ENCODE measurements at regions of chr11 and their contacts with region 1.

Region 1: GRCh38 chr11:46718155-46719019 is 626 bp upstream of the F2 start:
- DNase-seq: peak; percentile 98
- ATAC-seq: peak; percentile 92
- H3K4me3 ChIP-seq: peak overlapping the region in 2 of 3 experiments; percentile 3 to 92; a peak in 4 of 6 replicates
- H3K27ac ChIP-seq: peak overlapping the region; percentile 92
- H3K4me1 ChIP-seq: peaks cover 87% of the 10 kb centered on the region
- H3K27me3 ChIP-seq: no peaks in the 10 kb centered on the region; a peak in 1 of 5 replicates
- CTCF ChIP-seq: peak; percentile 50
- EP300 ChIP-seq: peak; percentile 77 to 97; a peak in 2 of 4 replicates
- POLR2A ChIP-seq: peak; percentile 56 to 58
- RAD21 ChIP-seq: peak; percentile 55

Region 2: DNA sequence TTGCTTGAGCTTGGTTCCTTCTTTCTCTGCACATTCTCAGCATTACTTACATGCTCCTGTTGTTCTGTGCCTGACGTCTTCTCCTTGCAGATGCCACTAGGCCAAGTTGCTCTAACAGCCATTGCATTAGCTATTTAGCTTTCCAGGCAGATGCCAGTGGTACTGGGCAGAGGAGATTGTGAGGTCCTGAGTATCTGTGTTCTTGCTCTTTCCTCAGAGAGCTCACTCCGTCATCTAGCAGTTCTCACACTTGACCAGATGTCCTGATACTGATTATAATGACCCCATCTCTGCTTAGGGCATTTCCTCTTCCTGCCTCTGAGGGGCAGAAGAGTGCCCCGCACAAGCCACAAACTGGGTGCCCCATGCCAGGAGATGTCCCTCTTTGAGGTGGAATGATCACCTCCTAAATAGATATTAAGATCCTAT is 48.7 kb before region 1 on chr11:
- CTCF ChIA-PET with region 1: no interaction called
- POLR2A ChIA-PET with region 1: interaction called, 22 read pairs
- in situ Hi-C with region 1: no loop called
- intact Hi-C with region 1: loop called (anchors 5 kb)
- DNase-seq: peak; percentile 23
- ATAC-seq: peak; percentile 74
- H3K4me3 ChIP-seq: no peak overlapping the region
- H3K27ac ChIP-seq: no peak overlapping the region
- H3K4me1 ChIP-seq: peaks cover 9% of the 10 kb centered on the region
- H3K27me3 ChIP-seq: no peaks in the 10 kb centered on the region
- CTCF ChIP-seq: peak; percentile 70
- EP300 ChIP-seq: no peak
- POLR2A ChIP-seq: no peak
- RAD21 ChIP-seq: peak; percentile 66; the same call in 1 of the 2 replicates

Region 3: GRCh38 chr11:46693597-46694012 is 24.8 kb before region 1 on chr11:
- CTCF ChIA-PET with region 1: no interaction called
- POLR2A ChIA-PET with region 1: interaction called, 272 read pairs
- in situ Hi-C with region 1: no loop called
- intact Hi-C with region 1: no loop called
- DNase-seq: no peak
- ATAC-seq: no peak
- H3K4me3 ChIP-seq: no peak overlapping the region
- H3K27ac ChIP-seq: peak overlapping the region; percentile 13
- H3K4me1 ChIP-seq: peaks cover 74% of the 10 kb centered on the region
- H3K27me3 ChIP-seq: no peaks in the 10 kb centered on the region
- CTCF ChIP-seq: no peak
- EP300 ChIP-seq: no peak
- POLR2A ChIP-seq: no peak
- RAD21 ChIP-seq: no peak

Region 4: DNA sequence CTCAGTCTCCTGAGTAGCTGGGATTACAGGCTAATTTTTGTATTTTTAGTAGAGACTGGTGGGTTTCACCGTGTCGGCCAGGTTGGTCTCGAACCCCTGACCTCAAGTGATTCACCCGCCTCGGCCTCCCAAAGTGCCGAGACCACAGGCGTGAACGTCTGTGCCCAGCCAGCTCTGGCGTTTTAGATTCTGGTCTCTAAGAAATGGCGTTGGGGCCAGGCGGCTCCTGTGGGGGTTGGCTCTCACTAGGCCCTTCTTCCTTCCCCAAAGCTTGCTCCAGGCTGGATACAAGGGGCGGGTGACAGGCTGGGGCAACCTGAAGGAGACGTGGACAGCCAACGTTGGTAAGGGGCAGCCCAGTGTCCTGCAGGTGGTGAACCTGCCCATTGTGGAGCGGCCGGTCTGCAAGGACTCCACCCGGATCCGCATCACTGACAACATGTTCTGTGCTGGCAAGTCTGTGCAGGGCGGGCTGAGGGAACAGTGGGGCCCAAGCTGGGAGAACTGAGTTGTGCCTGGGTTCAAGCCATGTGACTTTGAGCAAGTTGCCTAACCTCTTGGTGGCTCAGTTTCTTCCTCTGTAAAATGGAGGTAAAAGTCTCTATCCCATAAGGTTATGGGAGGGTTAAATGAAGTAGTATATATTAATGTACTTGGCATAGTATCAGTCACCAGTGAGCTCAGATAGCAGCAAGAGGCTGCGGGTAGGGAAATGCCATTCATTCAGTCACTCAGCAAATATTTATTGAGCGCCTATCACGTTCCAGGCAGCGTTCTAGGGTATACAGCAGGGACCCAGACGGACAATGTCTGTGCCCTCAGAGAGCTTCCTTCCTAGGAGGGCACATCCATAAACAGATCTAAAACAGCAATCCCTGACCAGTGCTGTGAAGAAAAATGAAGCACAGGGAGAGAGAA is 11.0 kb after region 1 on chr11:
- CTCF ChIA-PET with region 1: no interaction called
- POLR2A ChIA-PET with region 1: interaction called, 58 read pairs
- in situ Hi-C with region 1: no loop called
- intact Hi-C with region 1: no loop called
- DNase-seq: no peak
- ATAC-seq: peak; percentile 3; the same call in 1 of the 3 replicates
- H3K4me3 ChIP-seq: no peak overlapping the region
- H3K27ac ChIP-seq: no peak overlapping the region
- H3K4me1 ChIP-seq: peaks cover 56% of the 10 kb centered on the region
- H3K27me3 ChIP-seq: no peaks in the 10 kb centered on the region
- CTCF ChIP-seq: no peak
- EP300 ChIP-seq: no peak
- POLR2A ChIP-seq: peak in 1 of 2 experiments; percentile 36; a peak in 1 of 4 replicates
- RAD21 ChIP-seq: no peak

Region 5: GRCh38 chr11:46743693-46744339 is 25.4 kb after region 1 on chr11:
- CTCF ChIA-PET with region 1: no interaction called
- POLR2A ChIA-PET with region 1: interaction called, 58 read pairs
- in situ Hi-C with region 1: no loop called
- intact Hi-C with region 1: no loop called
- DNase-seq: no peak
- ATAC-seq: peak; percentile 17
- H3K4me3 ChIP-seq: no peak overlapping the region
- H3K27ac ChIP-seq: peak overlapping the region; percentile 27
- H3K4me1 ChIP-seq: no peaks in the 10 kb centered on the region
- H3K27me3 ChIP-seq: no peaks in the 10 kb centered on the region
- CTCF ChIP-seq: no peak
- EP300 ChIP-seq: no peak
- POLR2A ChIP-seq: peak in 1 of 2 experiments; percentile 38; a peak in 2 of 4 replicates
- RAD21 ChIP-seq: no peak

Region 6: GRCh38 chr11:46889689-46890475 is 171.5 kb after region 1 on chr11:
- CTCF ChIA-PET with region 1: no interaction called
- POLR2A ChIA-PET with region 1: no interaction called
- in situ Hi-C with region 1: no loop called
- intact Hi-C with region 1: no loop called
- DNase-seq: peak; percentile 65
- ATAC-seq: peak; percentile 88
- H3K4me3 ChIP-seq: no peak overlapping the region
- H3K27ac ChIP-seq: no peak overlapping the region
- H3K4me1 ChIP-seq: no peaks in the 10 kb centered on the region
- H3K27me3 ChIP-seq: no peaks in the 10 kb centered on the region
- CTCF ChIP-seq: peak; percentile 86
- EP300 ChIP-seq: no peak
- POLR2A ChIP-seq: no peak
- RAD21 ChIP-seq: peak; percentile 81

Region 7: GRCh38 chr11:47437746-47438418 is 719.5 kb after region 1 on chr11:
- CTCF ChIA-PET with region 1: no interaction called
- POLR2A ChIA-PET with region 1: no interaction called
- in situ Hi-C with region 1: no loop called
- intact Hi-C with region 1: loop called (anchors 5 kb)
- DNase-seq: peak; percentile 68
- ATAC-seq: peak; percentile 84
- H3K4me3 ChIP-seq: peak overlapping the region; percentile 70 to 80 (median 78)
- H3K27ac ChIP-seq: peak overlapping the region; percentile 97
- H3K4me1 ChIP-seq: peaks cover 73% of the 10 kb centered on the region
- H3K27me3 ChIP-seq: no peaks in the 10 kb centered on the region; a peak in 1 of 5 replicates
- CTCF ChIP-seq: peak; percentile 48
- EP300 ChIP-seq: 0 out of 4 replicates have a peak, but pooled peaks of 1 of the 2 experiments have one; percentile 48
- POLR2A ChIP-seq: peak; percentile 57 to 78
- RAD21 ChIP-seq: peak; percentile 55; the same call in 1 of the 2 replicates